ENCODE measurements at regions of chr1 and their contacts with region 1.

Region 1: DNA sequence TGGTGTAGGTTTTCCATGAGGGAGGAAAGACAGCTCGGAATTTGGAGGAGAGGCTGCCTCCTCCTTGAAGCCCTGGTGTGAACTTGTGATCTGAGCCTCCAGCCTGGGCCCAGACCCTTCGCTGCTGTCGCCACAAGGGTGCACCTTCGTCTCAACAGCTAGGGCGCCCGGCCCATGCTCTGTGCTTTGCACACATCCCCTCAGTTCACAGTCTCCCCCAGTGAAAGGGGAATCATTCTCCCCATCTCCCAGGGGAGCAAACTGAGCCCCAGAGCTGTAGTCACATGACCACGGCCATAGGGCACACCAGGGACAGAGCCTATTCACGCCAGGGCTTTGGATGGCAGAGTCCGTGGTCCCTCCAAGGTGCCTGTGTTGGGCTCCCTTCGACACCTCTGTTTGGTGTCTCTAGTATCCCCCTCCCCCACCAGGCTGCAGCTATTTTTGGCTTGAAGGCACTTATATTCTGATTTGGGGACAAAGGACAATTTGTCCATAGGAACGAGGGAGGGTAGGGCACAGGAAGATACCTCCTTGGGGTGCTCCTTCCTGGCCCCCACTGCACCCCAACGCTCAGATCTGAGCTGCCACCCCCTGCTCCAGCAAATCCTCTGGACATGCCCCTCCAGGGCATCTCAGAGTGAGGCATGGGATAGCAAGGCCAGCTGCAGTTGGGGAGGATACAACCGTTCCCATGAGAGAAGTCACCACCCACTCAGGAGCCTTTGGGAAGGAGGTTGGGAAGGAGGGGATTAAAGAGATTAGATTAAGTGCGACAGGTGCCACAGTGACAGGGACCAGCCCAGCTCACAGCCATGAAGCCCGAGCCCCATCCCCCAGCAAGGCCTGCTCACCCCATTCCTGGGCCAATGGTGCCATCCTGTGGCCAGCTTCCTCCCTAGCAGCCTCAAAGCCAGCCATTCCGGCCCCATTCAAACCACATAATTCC is 15.7 kb downstream of the MATN1 start:
- DNase-seq: peak; percentile 77
- ATAC-seq: peak; percentile 93
- H3K4me3 ChIP-seq: no peak overlapping the region
- H3K27ac ChIP-seq: no peak overlapping the region
- H3K4me1 ChIP-seq: no peaks in the 10 kb centered on the region
- H3K27me3 ChIP-seq: peaks cover 8% of the 10 kb centered on the region; the same call in 1 of the 2 replicates
- CTCF ChIP-seq: peak; percentile 90

Region 2: GRCh38 chr1:29341936-29342335 is 1365.8 kb before region 1 on chr1:
- CTCF ChIA-PET with region 1: no interaction called
- POLR2A ChIA-PET with region 1: no interaction called
- intact Hi-C with region 1: loop called (anchors 1 kb)
- DNase-seq: peak; percentile 17
- ATAC-seq: 0 out of 2 replicates have a peak, but pooled peaks have one; percentile 29
- H3K4me3 ChIP-seq: no peak overlapping the region
- H3K27ac ChIP-seq: no peak overlapping the region
- H3K4me1 ChIP-seq: no peaks in the 10 kb centered on the region
- H3K27me3 ChIP-seq: peaks cover 30% of the 10 kb centered on the region; the same call in 1 of the 2 replicates
- CTCF ChIP-seq: peak; percentile 51

Region 3: DNA sequence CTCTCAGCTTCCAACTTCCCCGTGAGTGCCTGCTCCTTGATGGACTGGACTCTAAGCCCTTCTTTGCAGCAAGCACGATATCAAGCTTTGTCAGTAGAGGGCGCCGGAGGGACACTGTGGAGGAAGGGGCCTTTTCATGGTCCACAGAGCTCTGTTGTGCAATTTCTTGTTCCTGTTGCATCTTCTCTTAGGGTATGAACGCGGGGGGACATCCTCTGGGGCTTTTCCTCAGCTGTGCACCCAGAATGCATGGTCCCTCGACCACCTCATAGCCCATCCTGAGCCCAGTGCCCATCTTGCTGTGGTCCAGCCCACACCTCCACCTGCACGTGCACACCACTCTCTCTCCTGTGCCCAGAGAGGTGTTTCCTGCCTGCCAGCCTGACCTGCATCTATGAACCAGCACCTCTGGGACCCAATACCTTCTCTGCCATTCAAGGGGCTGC is 914.6 kb before region 1 on chr1:
- CTCF ChIA-PET with region 1: no interaction called
- POLR2A ChIA-PET with region 1: no interaction called
- intact Hi-C with region 1: loop called (anchors 2 kb)
- DNase-seq: peak; percentile 92
- ATAC-seq: peak; percentile 90
- H3K4me3 ChIP-seq: no peak overlapping the region
- H3K27ac ChIP-seq: no peak overlapping the region
- H3K4me1 ChIP-seq: peaks cover 19% of the 10 kb centered on the region
- H3K27me3 ChIP-seq: no peaks in the 10 kb centered on the region
- CTCF ChIP-seq: peak; percentile 84

Measured in PC-3 (cell line).